Activated CD8-positive, alpha-beta T cell treated with anti-CD3 and anti-CD28 coated beads, Interleukin-2, amount 10 ng/mL, durations not matched to agents 7 days and 5 days (primary cell): ENCODE measurements at regions of chr9 and their contacts with region 1.

Region 1: GRCh38 chr9:89549031-89549644 is 51.2 kb upstream of the SEMA4D start:
- DNase-seq: peak; percentile 89
- ATAC-seq: peak; percentile 98
- H3K4me3 Mint-ChIP-seq: no peak overlapping the region
- H3K27ac Mint-ChIP-seq: no peak overlapping the region
- H3K4me1 Mint-ChIP-seq: peaks cover 19% of the 10 kb centered on the region
- H3K27me3 Mint-ChIP-seq: peaks cover 4% of the 10 kb centered on the region

Region 2: DNA sequence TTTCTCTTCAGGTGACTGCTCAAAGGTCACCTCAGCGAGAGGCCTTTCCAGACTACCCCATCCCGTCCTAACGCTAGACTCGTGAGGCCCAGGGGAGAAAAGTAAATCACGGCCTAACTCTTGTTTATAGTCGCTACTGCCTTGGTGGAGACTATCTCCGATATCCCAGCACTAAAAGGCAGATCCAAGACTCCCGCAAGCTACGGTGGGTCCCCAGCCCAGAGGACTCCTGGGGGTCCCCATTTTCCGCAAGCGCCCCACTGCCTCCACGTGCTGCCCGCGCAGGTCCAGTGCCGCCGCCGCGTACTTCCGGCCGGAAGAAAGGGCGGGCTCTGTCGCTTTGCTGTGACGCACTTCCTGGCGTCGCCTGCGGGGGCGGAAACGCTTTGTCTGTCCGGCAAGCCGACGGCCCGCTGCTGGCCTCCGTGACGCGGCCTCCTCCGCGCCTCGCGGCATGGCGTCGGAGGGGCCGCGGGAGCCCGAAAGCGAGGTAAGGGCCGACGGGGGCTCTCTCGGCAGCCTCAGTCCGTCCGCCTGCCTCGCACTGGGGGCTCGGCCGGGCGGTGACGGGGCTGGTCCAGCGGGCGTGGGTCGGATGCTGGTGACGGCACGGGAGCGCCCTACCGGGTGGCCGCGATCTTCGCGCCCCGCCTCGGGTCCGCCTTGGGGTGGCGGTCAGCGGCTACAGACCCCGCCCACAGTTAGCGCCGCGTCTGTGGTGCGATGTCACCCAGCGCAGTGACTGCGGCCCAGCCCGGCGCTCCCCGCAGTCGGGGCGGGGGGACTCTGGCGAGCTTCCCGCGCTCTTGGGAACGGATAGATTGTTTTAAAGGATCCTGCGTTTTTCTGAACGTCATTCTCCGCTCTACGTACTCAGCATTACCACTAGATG is 230.8 kb before region 1 on chr9 and contains the start of gene SECISBP2:
- CTCF ChIA-PET with region 1: interaction called, 10 read pairs
- POLR2A ChIA-PET with region 1: interaction called, 3 read pairs
- DNase-seq: peak; percentile 95
- ATAC-seq: peak; percentile 90
- H3K4me3 Mint-ChIP-seq: peak within 1 kb of the TSS; percentile 85
- H3K27ac Mint-ChIP-seq: peak within 1 kb of the TSS; percentile 98
- H3K4me1 Mint-ChIP-seq: peaks cover 77% of the 10 kb centered on the region
- H3K27me3 Mint-ChIP-seq: no peaks in the 10 kb centered on the region
- total RNA-seq, gene SECISBP2: 35.8 to 37.5 TPM

Region 3: DNA sequence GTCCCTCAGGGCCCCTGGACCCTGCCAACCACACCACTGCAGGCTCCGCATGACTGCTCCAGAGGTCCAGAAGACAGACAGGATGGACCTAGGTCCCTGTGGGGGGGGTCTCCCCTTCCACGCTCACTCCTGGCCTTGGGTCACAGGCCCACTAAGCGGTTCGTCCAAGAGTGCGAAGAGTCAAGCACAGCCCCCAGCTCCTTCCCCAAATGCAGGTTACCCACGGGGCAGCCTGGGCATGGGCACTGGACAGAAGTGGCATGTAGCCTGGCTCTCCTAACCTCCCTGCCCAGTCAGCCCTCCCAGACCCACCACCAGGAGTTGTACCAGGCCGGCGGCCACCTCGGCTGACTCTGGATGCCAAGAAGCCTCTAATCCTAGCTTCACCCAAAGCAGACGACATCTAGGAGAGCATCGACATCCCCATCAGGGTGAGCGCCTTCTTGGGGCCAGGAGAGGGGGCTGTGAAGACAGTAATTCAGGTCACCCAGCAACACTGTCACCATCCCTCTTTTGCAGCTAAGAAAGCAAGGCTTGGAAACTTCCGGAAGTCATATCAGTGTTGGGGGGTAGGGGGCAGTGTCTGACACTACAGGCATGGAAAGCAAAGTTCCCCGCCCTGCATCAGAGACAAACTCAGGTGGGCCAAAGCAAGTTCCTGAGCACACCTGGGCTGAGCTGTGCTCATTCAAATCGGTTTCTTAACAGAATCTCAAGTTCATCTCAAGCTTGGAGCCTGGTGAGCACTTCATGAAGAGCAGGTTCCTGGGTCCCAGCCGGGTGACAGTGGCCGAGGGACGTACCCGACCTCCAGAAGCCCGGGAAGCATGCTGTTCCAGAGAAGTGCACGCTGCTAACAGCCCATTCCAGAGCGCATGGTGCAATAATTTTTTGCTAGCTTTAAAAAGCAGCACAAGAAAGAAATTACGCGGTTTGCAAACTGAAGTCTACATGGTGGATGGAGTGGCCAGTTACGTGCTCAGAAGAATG is 119.9 kb before region 1 on chr9:
- CTCF ChIA-PET with region 1: interaction called, 83 read pairs
- POLR2A ChIA-PET with region 1: interaction called, 7 read pairs
- DNase-seq: peak; percentile 79
- ATAC-seq: peak; percentile 20
- H3K4me3 Mint-ChIP-seq: no peak overlapping the region
- H3K27ac Mint-ChIP-seq: peak overlapping the region; percentile 88
- H3K4me1 Mint-ChIP-seq: peaks cover 95% of the 10 kb centered on the region
- H3K27me3 Mint-ChIP-seq: no peaks in the 10 kb centered on the region

Region 4: GRCh38 chr9:89455356-89455824 is 93.7 kb before region 1 on chr9:
- CTCF ChIA-PET with region 1: interaction called, 31 read pairs
- POLR2A ChIA-PET with region 1: interaction called, 6 read pairs
- DNase-seq: peak; percentile 66
- ATAC-seq: peak; percentile 55
- H3K4me3 Mint-ChIP-seq: peak overlapping the region; percentile 68
- H3K27ac Mint-ChIP-seq: peak overlapping the region; percentile 96
- H3K4me1 Mint-ChIP-seq: peaks cover 97% of the 10 kb centered on the region
- H3K27me3 Mint-ChIP-seq: no peaks in the 10 kb centered on the region

Region 5: DNA sequence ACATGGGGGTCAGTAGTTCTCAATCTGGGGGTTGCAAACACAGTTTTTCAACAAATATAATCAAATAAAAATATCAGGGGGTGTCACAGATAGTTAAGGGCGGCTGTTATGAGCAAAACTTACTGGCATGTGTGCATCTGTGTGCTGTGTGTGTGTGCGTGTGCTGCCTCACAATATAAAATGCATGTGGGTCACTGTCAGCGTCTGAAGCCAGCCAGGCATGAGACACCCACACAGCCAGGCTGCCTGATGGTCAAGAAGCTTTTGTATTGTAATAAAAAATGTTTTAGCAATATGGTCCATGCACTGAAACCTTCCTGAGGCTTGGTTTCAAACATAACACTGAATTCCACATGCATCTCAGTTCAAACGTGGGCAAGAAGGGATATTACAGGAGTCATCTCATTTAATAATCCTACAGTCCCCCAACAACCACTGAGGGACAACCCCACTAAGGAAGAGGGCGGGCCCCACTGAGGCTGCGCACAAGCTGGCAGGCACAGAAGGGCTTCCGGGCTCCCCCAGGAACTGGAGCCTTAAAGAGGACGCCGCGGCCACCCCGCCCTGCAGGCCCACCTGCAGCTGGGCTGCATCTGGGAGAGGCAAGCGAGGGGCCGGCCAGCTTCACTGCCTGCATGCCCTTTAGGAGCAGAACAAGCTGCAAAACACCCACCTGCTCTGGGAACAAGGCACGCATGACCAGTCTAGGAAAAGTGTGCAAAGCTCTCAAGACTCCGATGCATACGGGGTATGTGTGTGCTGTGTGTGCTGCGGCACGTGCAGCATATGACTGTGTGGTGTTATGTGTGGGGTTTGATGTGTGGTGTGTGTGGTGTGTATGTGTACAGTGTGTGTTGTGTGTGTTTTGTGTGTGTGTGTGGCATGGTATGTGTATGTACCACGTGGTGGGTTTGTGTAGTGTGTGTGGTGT is 65.3 kb before region 1 on chr9:
- CTCF ChIA-PET with region 1: interaction called, 46 read pairs
- POLR2A ChIA-PET with region 1: interaction called, 20 read pairs
- DNase-seq: peak; percentile 84
- ATAC-seq: peak; percentile 70
- H3K4me3 Mint-ChIP-seq: peak overlapping the region; percentile 72
- H3K27ac Mint-ChIP-seq: peak overlapping the region; percentile 96
- H3K4me1 Mint-ChIP-seq: peaks cover 90% of the 10 kb centered on the region
- H3K27me3 Mint-ChIP-seq: no peaks in the 10 kb centered on the region

Region 6: DNA sequence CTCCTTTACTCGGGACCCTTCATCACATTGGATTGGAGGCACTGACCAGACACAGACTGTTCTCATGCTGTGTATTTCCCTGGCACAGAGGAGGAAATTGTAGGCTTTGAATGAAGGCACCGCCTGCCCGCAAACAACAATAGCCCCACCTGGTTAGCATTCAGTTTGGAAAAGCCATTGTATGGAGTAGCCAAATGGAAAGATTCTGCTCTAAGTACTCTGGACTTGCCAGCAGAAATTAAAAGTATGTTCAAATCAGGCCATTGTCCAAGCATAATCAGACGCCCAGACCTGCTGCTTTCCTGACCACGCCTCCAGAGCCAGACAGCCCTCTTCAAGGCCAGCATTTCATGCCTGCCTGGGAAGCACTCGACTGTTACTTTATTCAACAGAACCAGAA is 43.2 kb before region 1 on chr9:
- CTCF ChIA-PET with region 1: interaction called, 36 read pairs
- POLR2A ChIA-PET with region 1: interaction called, 6 read pairs
- DNase-seq: no peak
- ATAC-seq: no peak
- H3K4me3 Mint-ChIP-seq: no peak overlapping the region
- H3K27ac Mint-ChIP-seq: no peak overlapping the region
- H3K4me1 Mint-ChIP-seq: peaks cover 93% of the 10 kb centered on the region
- H3K27me3 Mint-ChIP-seq: no peaks in the 10 kb centered on the region

Region 7: GRCh38 chr9:89562186-89562814 is 13.2 kb after region 1 on chr9:
- CTCF ChIA-PET with region 1: interaction called, 14 read pairs
- POLR2A ChIA-PET with region 1: no interaction called
- DNase-seq: no peak
- ATAC-seq: no peak
- H3K4me3 Mint-ChIP-seq: no peak overlapping the region
- H3K27ac Mint-ChIP-seq: no peak overlapping the region
- H3K4me1 Mint-ChIP-seq: peaks cover 8% of the 10 kb centered on the region
- H3K27me3 Mint-ChIP-seq: peaks cover 13% of the 10 kb centered on the region